ENCODE measurements at regions of chr11 and their contacts with region 1.

Region 1: GRCh38 chr11:9748361-9748970 is 84.6 kb downstream of the SWAP70 start:
- DNase-seq: peak; percentile 85 to 89
- ATAC-seq: peak; percentile 96 to 97
- H3K4me3 ChIP-seq: no peak overlapping the region
- H3K27ac ChIP-seq: peak overlapping the region in 1 of 2 experiments; percentile 50; a peak in 2 of 6 replicates
- H3K4me1 ChIP-seq: peaks cover 21% of the 10 kb centered on the region
- CTCF ChIP-seq: peak; percentile 88
- EP300 ChIP-seq: no peak
- POLR2A ChIP-seq: no peak
- RAD21 ChIP-seq: peak; percentile 93 to 98

Region 2: DNA sequence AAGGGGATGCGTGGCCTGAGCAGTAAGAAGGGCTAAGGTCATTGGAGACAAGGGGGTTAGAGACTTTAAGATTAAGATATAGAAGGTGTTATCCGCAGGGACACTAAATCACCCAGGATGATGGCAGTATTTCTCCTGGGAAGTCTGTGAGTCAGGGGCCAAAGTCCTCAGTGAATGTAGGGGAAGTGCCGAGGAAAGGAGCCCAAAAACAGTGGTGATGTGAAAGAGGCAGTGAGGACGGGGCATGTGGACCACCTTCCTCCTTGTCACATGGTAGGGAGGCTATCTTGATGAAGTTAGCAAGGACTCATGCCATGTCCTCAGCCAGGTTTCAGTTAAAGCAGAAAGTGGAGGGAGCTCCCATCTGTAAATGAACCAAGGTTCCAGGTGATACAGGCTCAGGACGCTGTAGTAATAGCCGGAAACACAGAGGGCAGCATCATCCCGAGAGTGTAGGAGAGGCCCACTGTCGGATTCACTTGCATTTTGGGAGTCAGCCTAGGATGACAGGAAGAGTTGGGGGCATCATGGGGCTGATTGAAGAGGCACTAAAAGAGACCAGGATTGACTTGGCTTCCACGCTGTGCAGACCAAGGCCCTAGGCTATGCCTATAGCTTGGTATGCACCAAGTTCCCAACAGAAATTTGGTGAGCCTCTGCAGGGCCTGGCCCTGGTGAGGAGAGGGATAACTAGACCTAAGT is 141.5 kb before region 1 on chr11:
- CTCF ChIA-PET with region 1: interaction called, 100 read pairs
- POLR2A ChIA-PET with region 1: interaction called, 3 read pairs
- DNase-seq: peak in 1 of 2 experiments; percentile 70
- ATAC-seq: peak; percentile 94 to 95
- H3K4me3 ChIP-seq: no peak overlapping the region
- H3K27ac ChIP-seq: peak overlapping the region in 1 of 2 experiments; percentile 75; a peak in 4 of 6 replicates
- H3K4me1 ChIP-seq: peaks cover 20% of the 10 kb centered on the region
- CTCF ChIP-seq: peak; percentile 38
- EP300 ChIP-seq: no peak
- POLR2A ChIP-seq: no peak
- RAD21 ChIP-seq: peak; percentile 53 to 66; a peak in 4 of 5 replicates

Region 3: GRCh38 chr11:9636691-9637090 is 111.8 kb before region 1 on chr11:
- CTCF ChIA-PET with region 1: interaction called, 11 read pairs
- POLR2A ChIA-PET with region 1: no interaction called
- DNase-seq: no peak
- ATAC-seq: no peak
- H3K4me3 ChIP-seq: no peak overlapping the region
- H3K27ac ChIP-seq: no peak overlapping the region
- H3K4me1 ChIP-seq: no peaks in the 10 kb centered on the region
- CTCF ChIP-seq: no peak
- EP300 ChIP-seq: no peak
- POLR2A ChIP-seq: no peak
- RAD21 ChIP-seq: no peak

Region 4: GRCh38 chr11:9691865-9692264 is 56.6 kb before region 1 on chr11:
- CTCF ChIA-PET with region 1: interaction called, 10 read pairs
- POLR2A ChIA-PET with region 1: no interaction called
- DNase-seq: no peak
- ATAC-seq: 0 out of 6 replicates have a peak, but pooled peaks of 1 of the 2 experiments have one; percentile 27
- H3K4me3 ChIP-seq: no peak overlapping the region
- H3K27ac ChIP-seq: no peak overlapping the region
- H3K4me1 ChIP-seq: peaks cover 34% of the 10 kb centered on the region
- CTCF ChIP-seq: no peak
- EP300 ChIP-seq: no peak
- POLR2A ChIP-seq: no peak
- RAD21 ChIP-seq: no peak

Region 5: DNA sequence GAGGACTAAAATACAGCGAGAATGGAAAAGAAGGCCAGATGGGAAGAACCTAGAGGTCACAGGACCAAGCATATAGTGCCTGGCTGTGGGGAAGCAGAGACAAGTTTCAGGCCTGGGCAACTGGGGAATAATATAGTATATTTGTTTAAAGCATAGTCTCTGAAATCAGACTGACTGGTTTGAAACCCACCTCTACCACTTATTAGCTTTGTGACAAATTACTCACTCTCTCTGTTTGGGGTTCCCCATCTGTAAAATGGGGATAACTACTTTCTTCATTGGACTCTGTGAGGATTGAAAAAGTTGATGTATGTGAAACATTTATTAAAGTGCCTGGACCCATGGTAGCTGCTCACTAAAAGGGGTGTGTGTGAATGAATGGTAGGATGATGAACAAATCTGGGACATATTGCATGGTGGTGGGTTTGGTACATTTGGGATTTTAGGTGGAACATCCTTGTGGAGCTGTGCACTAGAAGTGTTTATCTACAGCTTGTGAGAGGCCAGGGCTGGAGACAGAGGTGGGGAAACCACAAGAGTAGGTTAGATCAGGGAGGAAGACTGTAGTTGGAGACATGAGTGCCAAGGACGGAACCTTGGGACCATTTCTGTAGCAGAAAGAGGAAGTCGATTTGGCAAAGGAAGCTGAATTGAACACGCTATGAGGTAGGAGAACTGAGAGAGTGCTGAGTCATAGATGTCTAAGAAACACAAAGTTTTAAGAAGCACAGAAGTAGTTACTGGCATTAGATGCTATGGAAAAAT is 32.0 kb before region 1 on chr11:
- CTCF ChIA-PET with region 1: interaction called, 16 read pairs
- POLR2A ChIA-PET with region 1: no interaction called
- DNase-seq: peak in 1 of 2 experiments; percentile 31
- ATAC-seq: peak in 1 of 2 experiments; percentile 42; a peak in 3 of 6 replicates
- H3K4me3 ChIP-seq: no peak overlapping the region
- H3K27ac ChIP-seq: peak overlapping the region; percentile 60 to 70
- H3K4me1 ChIP-seq: peaks cover 23% of the 10 kb centered on the region
- CTCF ChIP-seq: no peak
- EP300 ChIP-seq: no peak
- POLR2A ChIP-seq: no peak
- RAD21 ChIP-seq: no peak

Region 6: GRCh38 chr11:9722893-9723292 is 25.6 kb before region 1 on chr11:
- CTCF ChIA-PET with region 1: interaction called, 16 read pairs
- POLR2A ChIA-PET with region 1: no interaction called
- DNase-seq: no peak
- ATAC-seq: no peak
- H3K4me3 ChIP-seq: no peak overlapping the region
- H3K27ac ChIP-seq: no peak overlapping the region
- H3K4me1 ChIP-seq: peaks cover 20% of the 10 kb centered on the region
- CTCF ChIP-seq: no peak
- EP300 ChIP-seq: no peak
- POLR2A ChIP-seq: no peak
- RAD21 ChIP-seq: no peak

Region 7: GRCh38 chr11:9732453-9732852 is 16.0 kb before region 1 on chr11:
- CTCF ChIA-PET with region 1: interaction called, 23 read pairs
- POLR2A ChIA-PET with region 1: no interaction called
- DNase-seq: no peak
- ATAC-seq: no peak
- H3K4me3 ChIP-seq: no peak overlapping the region
- H3K27ac ChIP-seq: no peak overlapping the region
- H3K4me1 ChIP-seq: peaks cover 12% of the 10 kb centered on the region; the same call in 2 of the 3 replicates
- CTCF ChIP-seq: no peak
- EP300 ChIP-seq: no peak
- POLR2A ChIP-seq: no peak
- RAD21 ChIP-seq: no peak

Measured in A549 (cell line).